T-cell (primary cell): ENCODE measurements at regions of chr2 and their contacts with region 1.

Region 1: DNA sequence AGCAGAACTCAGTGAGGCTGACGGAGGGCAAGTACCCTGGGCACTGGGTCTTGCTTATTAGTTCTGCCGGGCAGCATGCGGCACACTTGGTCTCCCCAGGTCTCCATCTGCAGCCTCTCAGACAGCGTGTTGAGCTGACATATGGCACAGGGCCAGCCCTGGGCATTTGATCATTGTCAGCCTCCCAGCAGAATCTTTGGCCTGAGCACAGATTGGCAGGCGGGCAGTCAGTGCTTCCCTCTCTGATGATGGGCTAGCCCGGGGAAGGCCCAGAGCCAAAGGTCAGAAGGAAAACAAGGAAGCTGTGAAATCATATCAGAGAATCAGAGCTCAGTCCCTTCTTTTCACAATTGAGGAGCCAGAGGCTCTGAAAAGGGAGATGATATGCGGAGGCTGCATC is 150.1 kb upstream of the LRRTM1 start:
- DNase-seq: no peak
- ATAC-seq: no peak
- H3K4me3 ChIP-seq: no peak overlapping the region
- H3K4me3 Mint-ChIP-seq: no peak overlapping the region
- H3K27ac ChIP-seq: no peak overlapping the region
- H3K27ac Mint-ChIP-seq: no peak overlapping the region
- H3K4me1 ChIP-seq: no peaks in the 10 kb centered on the region
- H3K4me1 Mint-ChIP-seq: no peaks in the 10 kb centered on the region
- H3K27me3 ChIP-seq: no peaks in the 10 kb centered on the region
- H3K27me3 Mint-ChIP-seq: no peaks in the 10 kb centered on the region

Region 2: GRCh38 chr2:79952616-79953015 is 502.0 kb before region 1 on chr2:
- CTCF ChIA-PET with region 1: interaction called in 1 of 2 experiments, 10 read pairs
- POLR2A ChIA-PET with region 1: no interaction called
- DNase-seq: no peak
- ATAC-seq: no peak
- H3K4me3 ChIP-seq: no peak overlapping the region
- H3K4me3 Mint-ChIP-seq: no peak overlapping the region
- H3K27ac ChIP-seq: no peak overlapping the region
- H3K27ac Mint-ChIP-seq: no peak overlapping the region
- H3K4me1 ChIP-seq: no peaks in the 10 kb centered on the region
- H3K4me1 Mint-ChIP-seq: no peaks in the 10 kb centered on the region
- H3K27me3 ChIP-seq: no peaks in the 10 kb centered on the region
- H3K27me3 Mint-ChIP-seq: no peaks in the 10 kb centered on the region